Left ventricle myocardium inferior (tissue), 1 donor: ENCODE measurements at regions of chr11 and their contacts with region 1.

Region 1: GRCh38 chr11:108222686-108223448 is at the start of gene ATM:
- DNase-seq: peak; percentile 99
- H3K4me3 ChIP-seq: peak within 1 kb of the TSS; percentile 75
- H3K27ac ChIP-seq: peak within 1 kb of the TSS; percentile 96
- H3K4me1 ChIP-seq: peaks cover 64% of the 10 kb centered on the region
- H3K27me3 ChIP-seq: no peaks in the 10 kb centered on the region
- CTCF ChIP-seq: peak; percentile 78
- total RNA-seq, gene ATM: 30.1 TPM

Region 2: DNA sequence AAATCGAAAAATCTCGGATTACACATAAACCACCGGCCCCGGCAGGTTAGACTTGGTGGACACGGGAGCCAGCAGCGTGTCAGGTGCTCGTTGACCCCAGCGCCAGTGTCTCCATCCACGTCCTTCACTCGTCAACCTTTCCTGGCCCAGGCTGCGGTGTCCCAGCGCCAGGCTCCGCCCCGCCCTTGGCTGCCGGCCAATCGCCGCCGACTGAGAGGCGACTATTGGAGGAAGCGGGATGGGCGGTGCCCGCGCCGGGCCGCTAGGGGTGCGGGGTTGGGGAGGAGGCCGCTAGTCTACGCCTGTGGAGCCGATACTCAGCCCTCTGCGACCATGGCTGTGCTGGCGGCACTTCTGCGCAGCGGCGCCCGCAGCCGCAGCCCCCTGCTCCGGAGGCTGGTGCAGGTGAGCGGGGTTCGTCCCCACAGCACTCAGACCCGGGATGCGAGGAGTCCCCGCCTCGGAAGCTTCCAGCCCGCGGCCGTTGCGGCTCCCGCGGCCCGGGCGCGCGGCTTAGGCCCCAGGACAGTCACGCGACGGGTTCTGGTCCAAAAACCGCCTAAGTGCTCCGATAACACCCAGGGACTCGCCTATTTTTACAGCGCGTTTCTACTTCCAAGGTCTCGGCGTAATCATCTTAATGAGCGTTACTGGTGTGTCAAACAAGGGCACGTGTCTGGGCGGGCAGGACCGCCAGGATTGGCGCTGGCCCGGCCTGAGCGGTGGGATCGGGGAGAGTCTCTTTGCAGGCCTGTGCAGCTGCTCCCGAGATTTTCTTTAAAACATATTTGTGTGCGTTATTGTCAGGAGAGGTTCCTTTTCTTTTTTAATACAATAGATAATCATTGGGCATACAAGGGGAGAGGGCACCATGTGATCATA is 101.4 kb before region 1 on chr11 and contains the start of gene ACAT1:
- intact Hi-C with region 1: loop called (anchors 5 kb)
- DNase-seq: peak; percentile 99
- H3K4me3 ChIP-seq: peak within 1 kb of the TSS; percentile 84
- H3K27ac ChIP-seq: peak within 1 kb of the TSS; percentile 98
- H3K4me1 ChIP-seq: peaks cover 62% of the 10 kb centered on the region
- H3K27me3 ChIP-seq: no peaks in the 10 kb centered on the region
- CTCF ChIP-seq: peak; percentile 57
- total RNA-seq, gene ACAT1: 404 TPM

Region 3: DNA sequence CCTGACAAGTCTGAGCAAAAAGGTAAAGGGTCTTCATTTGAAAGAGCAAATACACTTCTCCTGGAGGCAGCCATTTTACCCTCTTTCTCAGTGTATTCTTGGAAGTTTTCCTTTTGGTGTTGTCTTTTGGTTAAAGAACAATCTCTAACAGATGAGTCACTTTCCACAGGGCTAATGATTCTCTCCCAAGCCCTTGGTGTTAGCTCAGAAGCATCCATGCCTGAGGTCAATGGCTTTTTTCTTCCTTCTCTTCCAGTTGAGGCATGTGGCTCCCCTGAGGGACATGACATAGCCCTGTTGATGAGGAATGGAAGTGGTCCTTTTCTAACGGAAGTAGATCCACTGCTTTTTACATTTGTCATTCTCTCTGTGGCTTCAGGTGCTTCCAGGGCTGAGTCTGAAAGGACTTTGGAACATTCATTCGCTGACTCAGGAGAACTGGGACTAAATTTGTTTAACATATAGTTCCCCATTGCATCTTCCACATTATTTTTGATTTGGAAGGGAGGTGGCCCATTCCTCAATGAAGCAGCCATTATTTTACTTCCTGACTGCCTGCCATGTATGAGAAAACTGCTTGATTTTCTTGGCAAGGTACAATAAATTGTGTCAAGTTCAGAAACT is 289.1 kb after region 1 on chr11:
- intact Hi-C with region 1: no loop called
- DNase-seq: no peak
- H3K4me3 ChIP-seq: no peak overlapping the region
- H3K27ac ChIP-seq: no peak overlapping the region
- H3K4me1 ChIP-seq: no peaks in the 10 kb centered on the region
- H3K27me3 ChIP-seq: peaks cover 3% of the 10 kb centered on the region
- CTCF ChIP-seq: no peak

Region 4: DNA sequence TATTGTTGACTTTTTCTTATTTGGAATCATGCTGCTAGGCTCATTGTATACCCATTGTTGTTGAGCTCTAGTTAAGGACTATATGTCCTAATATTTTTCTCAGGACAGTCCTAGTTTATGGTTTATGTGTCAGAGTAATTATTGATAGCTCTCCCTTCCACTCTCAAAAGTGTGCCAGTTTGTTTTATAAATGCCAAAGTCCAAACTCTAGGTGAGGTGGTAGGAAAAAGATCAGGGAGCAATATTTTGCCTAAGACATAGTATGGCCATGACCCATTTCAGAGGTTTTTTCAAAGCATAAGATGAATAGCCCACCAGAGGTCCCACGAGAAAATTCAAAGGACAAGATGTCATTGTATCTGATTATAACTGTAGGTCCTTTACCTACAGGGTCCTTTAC is 421.1 kb after region 1 on chr11:
- intact Hi-C with region 1: no loop called
- DNase-seq: no peak
- H3K4me3 ChIP-seq: no peak overlapping the region
- H3K27ac ChIP-seq: no peak overlapping the region
- H3K4me1 ChIP-seq: peaks cover 9% of the 10 kb centered on the region
- H3K27me3 ChIP-seq: no peaks in the 10 kb centered on the region
- CTCF ChIP-seq: no peak